ENCODE measurements at regions of chr12 and their contacts with region 1.

Region 1: GRCh38 chr12:26195641-26196420 is 458 bp downstream of the SSPN start:
- DNase-seq: peak; percentile 54
- ATAC-seq: peak; percentile 77
- H3K4me3 ChIP-seq: peak overlapping the region; percentile 44 to 74 (median 64)
- H3K4me3 Mint-ChIP-seq: peak overlapping the region; percentile 98
- H3K27ac ChIP-seq: peak overlapping the region in 1 of 2 donors; percentile 7
- H3K27ac Mint-ChIP-seq: peak overlapping the region; percentile 97
- H3K4me1 ChIP-seq: peaks cover 6 to 15% of the 10 kb centered on the region in 2 donors
- H3K4me1 Mint-ChIP-seq: peaks cover 16% of the 10 kb centered on the region
- H3K27me3 ChIP-seq: peaks cover 0 to 5% (median 0%) of the 10 kb centered on the region in 4 experiments
- H3K27me3 Mint-ChIP-seq: peaks cover 4% of the 10 kb centered on the region
- CTCF ChIP-seq: no peak

Region 2: DNA sequence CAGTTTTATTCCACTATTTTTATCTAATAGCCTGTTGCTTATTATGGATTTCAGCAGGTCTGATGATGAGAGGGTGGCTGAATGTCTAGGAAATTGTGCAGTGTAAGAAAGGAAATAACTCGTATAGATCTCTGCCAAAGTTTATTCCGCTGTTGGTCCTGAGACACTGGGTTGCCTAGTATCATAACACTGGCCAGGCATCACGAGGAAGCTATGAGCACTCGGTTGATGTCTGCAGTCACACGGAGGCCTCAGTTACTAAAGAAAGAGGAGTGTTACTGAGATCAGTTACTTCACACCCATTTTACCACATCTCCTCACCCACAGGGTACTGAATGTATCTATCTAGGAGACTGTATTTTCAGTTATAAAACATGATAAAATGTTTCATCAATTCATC is 92.9 kb before region 1 on chr12:
- CTCF ChIA-PET with region 1: no interaction called
- POLR2A ChIA-PET with region 1: no interaction called
- intact Hi-C with region 1: no loop called
- DNase-seq: no peak
- ATAC-seq: no peak
- H3K4me3 ChIP-seq: no peak overlapping the region
- H3K4me3 Mint-ChIP-seq: no peak overlapping the region
- H3K27ac ChIP-seq: no peak overlapping the region
- H3K27ac Mint-ChIP-seq: no peak overlapping the region
- H3K4me1 ChIP-seq: no peaks in the 10 kb centered on the region
- H3K4me1 Mint-ChIP-seq: no peaks in the 10 kb centered on the region
- H3K27me3 ChIP-seq: no peaks in the 10 kb centered on the region
- H3K27me3 Mint-ChIP-seq: no peaks in the 10 kb centered on the region
- CTCF ChIP-seq: no peak

Region 3: DNA sequence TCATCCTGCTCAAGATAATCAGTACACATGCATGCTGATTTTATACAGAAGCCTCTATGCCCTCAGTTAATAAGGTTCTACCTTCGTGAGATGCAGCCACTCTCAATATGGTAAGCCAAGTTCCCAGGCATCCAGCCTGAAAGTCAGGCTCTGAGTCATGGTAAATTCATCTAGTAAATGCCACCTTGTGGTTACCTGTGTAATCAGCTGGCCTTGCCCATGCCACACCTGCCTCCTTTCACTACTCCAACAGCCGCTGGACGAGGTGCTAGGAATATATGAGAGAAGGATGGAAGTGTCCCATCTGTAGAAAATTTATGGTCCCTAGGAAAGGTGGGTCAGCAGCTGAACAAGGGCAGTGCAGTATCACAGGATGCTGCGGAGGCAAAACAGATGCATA is 206.8 kb after region 1 on chr12:
- CTCF ChIA-PET with region 1: no interaction called
- POLR2A ChIA-PET with region 1: no interaction called
- intact Hi-C with region 1: loop called (anchors 10 kb)
- DNase-seq: peak; percentile 43
- ATAC-seq: peak; percentile 53
- H3K4me3 ChIP-seq: no peak overlapping the region
- H3K4me3 Mint-ChIP-seq: no peak overlapping the region
- H3K27ac ChIP-seq: no peak overlapping the region
- H3K27ac Mint-ChIP-seq: no peak overlapping the region
- H3K4me1 ChIP-seq: peaks cover 0 to 4% of the 10 kb centered on the region in 2 donors
- H3K4me1 Mint-ChIP-seq: peaks cover 2% of the 10 kb centered on the region
- H3K27me3 ChIP-seq: no peaks in the 10 kb centered on the region
- H3K27me3 Mint-ChIP-seq: no peaks in the 10 kb centered on the region
- CTCF ChIP-seq: peak; percentile 38